ENCODE measurements at regions of chr1 and their contacts with region 1.

Region 1: GRCh38 chr1:207963427-207964194 is 52.7 kb upstream of the CD34 start:
- DNase-seq: peak in 1 of 2 experiments; percentile 94
- H3K4me3 ChIP-seq: peak overlapping the region; percentile 30 to 64 (median 53)
- H3K27ac ChIP-seq: no peak overlapping the region; the same call in 1 of the 2 replicates
- H3K4me1 ChIP-seq: peaks cover 0 to 17% (median 5%) of the 10 kb centered on the region in 4 experiments; a peak in 6 of 7 replicates
- H3K27me3 ChIP-seq: peaks cover 19 to 60% (median 41%) of the 10 kb centered on the region in 4 experiments
- CTCF ChIP-seq: peak; percentile 94 to 98 (median 95)
- EP300 ChIP-seq: no peak
- POLR2A ChIP-seq: peak in 1 of 2 experiments; percentile 93; a peak in 2 of 3 replicates
- RAD21 ChIP-seq: peak; percentile 94 to 98

Region 2: DNA sequence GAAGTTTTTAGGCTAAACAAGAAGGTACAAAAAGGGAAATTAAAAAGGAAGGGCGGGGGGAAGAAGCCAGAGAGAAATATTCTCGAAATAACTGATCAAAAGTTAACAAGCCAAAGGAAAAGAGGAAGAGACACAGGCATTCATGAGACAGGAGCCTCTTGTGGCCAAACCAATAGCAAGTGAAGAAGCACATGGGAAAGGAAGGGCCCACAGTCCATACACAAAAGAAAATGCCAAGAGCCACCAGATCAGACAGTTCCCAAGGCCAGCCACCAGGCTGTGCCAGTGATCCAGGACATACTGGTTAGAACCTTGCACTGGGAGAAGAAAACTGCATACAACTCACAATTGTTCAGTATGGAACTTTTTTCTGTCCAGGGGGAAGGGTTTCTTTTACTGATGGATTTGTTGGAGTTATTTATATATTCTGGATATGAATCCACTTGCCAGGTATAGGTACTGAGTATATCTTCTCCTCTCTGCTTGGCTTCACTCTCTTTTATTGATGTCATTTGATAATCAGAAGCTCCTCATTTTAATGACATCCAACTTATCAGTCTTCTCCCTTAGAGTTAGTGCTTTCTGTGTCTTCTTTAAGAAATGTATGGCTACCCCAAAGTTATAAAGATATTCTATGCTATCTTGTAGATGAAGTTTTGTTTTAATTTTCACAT is 135.0 kb before region 1 on chr1:
- CTCF ChIA-PET with region 1: interaction called, 36 read pairs
- POLR2A ChIA-PET with region 1: interaction called, 4 read pairs
- DNase-seq: peak; percentile 63 to 66
- H3K4me3 ChIP-seq: no peak overlapping the region
- H3K27ac ChIP-seq: no peak overlapping the region
- H3K4me1 ChIP-seq: no peaks in the 10 kb centered on the region; a peak in 1 of 7 replicates
- H3K27me3 ChIP-seq: no peaks in the 10 kb centered on the region
- CTCF ChIP-seq: peak; percentile 74 to 94 (median 91)
- EP300 ChIP-seq: no peak
- POLR2A ChIP-seq: no peak
- RAD21 ChIP-seq: peak; percentile 88 to 92

Region 3: GRCh38 chr1:207876131-207876530 is 87.5 kb before region 1 on chr1:
- CTCF ChIA-PET with region 1: interaction called, 223 read pairs
- POLR2A ChIA-PET with region 1: no interaction called
- DNase-seq: no peak
- H3K4me3 ChIP-seq: no peak overlapping the region
- H3K27ac ChIP-seq: no peak overlapping the region
- H3K4me1 ChIP-seq: 0 out of 7 replicates have a peak, but pooled peaks cover 0 to 2% (median 0%) of the 10 kb centered on the region in 4 experiments
- H3K27me3 ChIP-seq: no peaks in the 10 kb centered on the region
- CTCF ChIP-seq: peak; percentile 50 to 66 (median 51)
- EP300 ChIP-seq: no peak
- POLR2A ChIP-seq: no peak
- RAD21 ChIP-seq: peak; percentile 21 to 50; a peak in 3 of 4 replicates

Region 4: DNA sequence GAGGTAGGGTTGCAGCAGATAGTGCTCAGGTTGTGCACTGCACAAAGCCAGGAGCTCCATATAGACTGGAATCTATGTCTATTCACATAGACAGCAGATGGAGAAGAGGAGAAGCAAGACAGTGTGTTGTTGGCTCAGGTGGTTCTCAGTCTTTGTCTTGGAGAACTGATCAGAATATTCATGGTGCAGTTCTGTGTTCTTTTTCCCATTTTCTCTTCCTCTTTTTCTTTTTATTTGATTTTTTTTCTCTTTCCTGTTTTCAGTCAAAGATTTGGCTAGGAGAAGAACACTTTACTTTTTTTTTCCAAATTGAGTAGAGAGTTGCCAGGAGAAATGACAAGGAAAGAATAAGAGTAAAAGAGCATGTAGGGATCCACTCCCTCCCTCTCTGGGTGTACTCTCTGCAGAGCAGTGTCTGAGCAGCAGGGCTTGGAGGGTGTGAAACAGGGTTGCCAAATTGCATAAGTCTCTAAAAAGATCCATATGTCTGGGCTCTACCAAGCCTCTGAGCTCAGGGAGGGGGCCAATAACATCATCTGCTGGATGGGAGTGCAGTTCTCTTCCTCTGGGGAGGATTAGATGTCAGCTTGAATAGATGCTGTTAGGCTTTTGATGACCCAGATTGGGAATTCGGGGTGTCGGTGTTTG is 44.0 kb before region 1 on chr1:
- CTCF ChIA-PET with region 1: interaction called, 21 read pairs
- POLR2A ChIA-PET with region 1: no interaction called
- DNase-seq: no peak
- H3K4me3 ChIP-seq: no peak overlapping the region
- H3K27ac ChIP-seq: no peak overlapping the region
- H3K4me1 ChIP-seq: no peaks in the 10 kb centered on the region; a peak in 2 of 7 replicates
- H3K27me3 ChIP-seq: no peaks in the 10 kb centered on the region
- CTCF ChIP-seq: no peak
- EP300 ChIP-seq: no peak
- POLR2A ChIP-seq: no peak
- RAD21 ChIP-seq: no peak

Region 5: GRCh38 chr1:207952617-207953542 is 10.7 kb before region 1 on chr1:
- CTCF ChIA-PET with region 1: interaction called, 17 read pairs
- POLR2A ChIA-PET with region 1: interaction called, 3 read pairs
- DNase-seq: no peak
- H3K4me3 ChIP-seq: no peak overlapping the region
- H3K27ac ChIP-seq: no peak overlapping the region
- H3K4me1 ChIP-seq: no peaks in the 10 kb centered on the region
- H3K27me3 ChIP-seq: peaks cover 1 to 10% (median 7%) of the 10 kb centered on the region in 4 experiments; a peak in 6 of 7 replicates
- CTCF ChIP-seq: no peak
- EP300 ChIP-seq: no peak
- POLR2A ChIP-seq: no peak
- RAD21 ChIP-seq: no peak

Region 6: GRCh38 chr1:207981976-207982375 is 18.4 kb after region 1 on chr1:
- CTCF ChIA-PET with region 1: interaction called, 39 read pairs
- POLR2A ChIA-PET with region 1: no interaction called
- DNase-seq: peak in 1 of 2 experiments; percentile 52
- H3K4me3 ChIP-seq: no peak overlapping the region
- H3K27ac ChIP-seq: no peak overlapping the region
- H3K4me1 ChIP-seq: no peaks in the 10 kb centered on the region
- H3K27me3 ChIP-seq: no peaks in the 10 kb centered on the region
- CTCF ChIP-seq: peak; percentile 80 to 94 (median 93)
- EP300 ChIP-seq: no peak
- POLR2A ChIP-seq: no peak
- RAD21 ChIP-seq: peak; percentile 76 to 82

Region 7: GRCh38 chr1:208090383-208091301 is 127.0 kb after region 1 on chr1:
- CTCF ChIA-PET with region 1: no interaction called
- POLR2A ChIA-PET with region 1: no interaction called
- DNase-seq: no peak
- H3K4me3 ChIP-seq: no peak overlapping the region
- H3K27ac ChIP-seq: no peak overlapping the region
- H3K4me1 ChIP-seq: peaks cover 0 to 2% (median under 1%) of the 10 kb centered on the region in 4 experiments; a peak in 2 of 7 replicates
- H3K27me3 ChIP-seq: no peaks in the 10 kb centered on the region
- CTCF ChIP-seq: no peak
- EP300 ChIP-seq: no peak
- POLR2A ChIP-seq: no peak
- RAD21 ChIP-seq: no peak

Measured in H1 (cell line).